HCT116 (cell line): ENCODE measurements at regions of chr11 and their contacts with region 1.

Region 1: DNA sequence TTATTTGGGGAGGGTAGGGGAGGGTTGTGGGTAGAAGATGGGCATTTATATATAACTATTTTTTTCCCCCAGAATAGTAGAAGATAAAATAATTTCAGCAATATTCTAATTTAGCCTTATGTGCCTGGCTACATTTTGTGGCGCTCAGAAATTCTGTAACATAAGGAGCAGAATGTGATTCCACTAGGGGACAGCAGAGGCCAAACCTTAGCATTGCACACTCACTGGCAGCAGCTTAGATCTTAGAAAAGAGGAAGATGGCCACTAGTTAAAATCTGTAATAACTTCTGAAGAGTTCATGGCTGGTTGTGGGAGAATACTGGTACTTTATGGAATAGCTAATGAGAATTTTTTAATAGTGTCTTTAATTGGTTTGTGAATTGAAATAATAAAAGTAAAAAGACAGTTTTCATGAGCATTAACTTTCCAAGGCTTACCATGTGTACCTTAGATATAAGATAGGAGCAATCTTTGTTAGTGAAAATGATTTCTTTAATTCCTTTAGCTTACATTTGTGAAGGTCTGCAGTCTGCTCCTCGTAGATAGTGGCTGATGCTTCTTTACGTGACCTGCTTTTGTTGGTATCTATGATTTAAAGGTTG is 33.1 kb downstream of the DDX10 start:
- DNase-seq: peak; percentile 51
- ATAC-seq: peak; percentile 86
- H3K4me3 ChIP-seq: no peak overlapping the region
- H3K27ac ChIP-seq: no peak overlapping the region
- H3K4me1 ChIP-seq: peaks cover 5 to 13% of the 10 kb centered on the region in 2 experiments
- H3K27me3 ChIP-seq: no peaks in the 10 kb centered on the region
- CTCF ChIP-seq: peak; percentile 74 to 89 (median 88)
- POLR2A ChIP-seq: no peak
- RAD21 ChIP-seq: peak; percentile 97

Region 2: DNA sequence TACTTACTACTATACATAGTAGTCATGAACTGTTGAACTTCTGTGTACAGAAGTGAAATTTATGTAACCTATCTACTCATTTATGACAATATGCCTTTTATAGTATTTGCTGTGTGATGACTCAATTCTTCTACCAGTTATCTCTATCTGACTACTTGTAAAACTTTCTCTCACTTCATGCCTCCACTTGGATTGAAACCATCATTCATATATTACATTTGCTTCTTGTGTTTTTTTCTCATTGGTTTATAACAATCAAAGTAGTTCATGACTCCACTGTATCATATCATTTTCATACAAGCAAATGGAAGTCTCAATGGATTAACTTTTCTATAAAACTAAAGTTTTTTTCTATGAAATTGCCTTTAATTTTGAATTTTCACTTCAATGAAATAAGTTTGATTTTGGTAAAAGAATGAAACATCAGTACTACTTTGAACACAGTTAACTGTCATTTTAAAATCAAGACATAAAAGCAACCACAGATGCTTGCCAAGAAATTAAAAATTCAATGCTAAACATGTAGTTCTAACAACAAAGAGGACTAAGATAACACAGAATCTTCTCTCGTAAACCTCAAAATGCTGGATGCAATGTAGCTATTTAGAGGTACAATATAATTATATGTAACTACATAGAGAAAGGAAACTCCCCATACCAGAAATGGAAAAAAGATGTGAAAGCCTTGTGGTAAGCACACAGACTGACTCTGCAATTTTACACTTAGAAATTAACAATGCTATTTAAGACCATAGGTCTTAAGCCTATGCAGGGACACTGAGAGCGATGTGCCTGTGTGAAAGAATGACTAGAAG is 76.8 kb before region 1 on chr11:
- CTCF ChIA-PET with region 1: no interaction called
- POLR2A ChIA-PET with region 1: no interaction called
- RAD21 ChIA-PET with region 1: no interaction called
- intact Hi-C with region 1: no loop called
- DNase-seq: no peak
- ATAC-seq: no peak
- H3K4me3 ChIP-seq: no peak overlapping the region
- H3K27ac ChIP-seq: no peak overlapping the region
- H3K4me1 ChIP-seq: peaks cover 15 to 36% of the 10 kb centered on the region in 2 experiments
- H3K27me3 ChIP-seq: no peaks in the 10 kb centered on the region
- CTCF ChIP-seq: no peak
- POLR2A ChIP-seq: no peak
- RAD21 ChIP-seq: no peak

Region 3: GRCh38 chr11:108718466-108718865 is 20.5 kb after region 1 on chr11:
- CTCF ChIA-PET with region 1: no interaction called
- POLR2A ChIA-PET with region 1: no interaction called
- RAD21 ChIA-PET with region 1: no interaction called
- intact Hi-C with region 1: no loop called
- DNase-seq: no peak
- ATAC-seq: no peak
- H3K4me3 ChIP-seq: no peak overlapping the region
- H3K27ac ChIP-seq: no peak overlapping the region
- H3K4me1 ChIP-seq: no peaks in the 10 kb centered on the region
- H3K27me3 ChIP-seq: no peaks in the 10 kb centered on the region
- CTCF ChIP-seq: no peak
- POLR2A ChIP-seq: no peak
- RAD21 ChIP-seq: no peak

Region 4: DNA sequence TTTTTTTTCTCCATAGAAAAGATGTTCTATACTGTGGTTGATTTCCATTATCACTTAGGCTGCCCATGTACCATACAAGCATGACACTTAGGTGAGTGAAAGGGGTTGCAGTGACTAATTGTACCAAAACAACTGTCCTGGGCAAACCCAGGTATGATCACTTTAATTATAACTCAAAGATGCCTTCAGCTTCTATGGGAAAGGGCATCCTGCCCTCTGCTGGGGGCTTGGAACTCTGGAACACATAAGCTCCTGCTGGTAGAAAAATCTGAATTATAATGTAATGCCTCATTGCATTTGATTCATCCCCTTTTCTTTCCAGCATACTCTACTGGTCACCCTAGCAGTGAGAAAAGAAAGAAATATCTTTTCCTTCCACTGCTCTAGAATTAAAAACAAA is 173.2 kb after region 1 on chr11:
- CTCF ChIA-PET with region 1: interaction called, 23 read pairs
- POLR2A ChIA-PET with region 1: no interaction called
- RAD21 ChIA-PET with region 1: interaction called in 1 of 2 experiments, 5 read pairs
- intact Hi-C with region 1: loop called (anchors 1 kb)
- DNase-seq: no peak
- ATAC-seq: peak; percentile 75
- H3K4me3 ChIP-seq: no peak overlapping the region
- H3K27ac ChIP-seq: peak overlapping the region; percentile 75
- H3K4me1 ChIP-seq: peaks cover 30 to 42% of the 10 kb centered on the region in 2 experiments
- H3K27me3 ChIP-seq: no peaks in the 10 kb centered on the region
- CTCF ChIP-seq: peak; percentile 48 to 72 (median 70); a peak in 5 of 6 replicates
- POLR2A ChIP-seq: no peak
- RAD21 ChIP-seq: peak; percentile 80

Region 5: DNA sequence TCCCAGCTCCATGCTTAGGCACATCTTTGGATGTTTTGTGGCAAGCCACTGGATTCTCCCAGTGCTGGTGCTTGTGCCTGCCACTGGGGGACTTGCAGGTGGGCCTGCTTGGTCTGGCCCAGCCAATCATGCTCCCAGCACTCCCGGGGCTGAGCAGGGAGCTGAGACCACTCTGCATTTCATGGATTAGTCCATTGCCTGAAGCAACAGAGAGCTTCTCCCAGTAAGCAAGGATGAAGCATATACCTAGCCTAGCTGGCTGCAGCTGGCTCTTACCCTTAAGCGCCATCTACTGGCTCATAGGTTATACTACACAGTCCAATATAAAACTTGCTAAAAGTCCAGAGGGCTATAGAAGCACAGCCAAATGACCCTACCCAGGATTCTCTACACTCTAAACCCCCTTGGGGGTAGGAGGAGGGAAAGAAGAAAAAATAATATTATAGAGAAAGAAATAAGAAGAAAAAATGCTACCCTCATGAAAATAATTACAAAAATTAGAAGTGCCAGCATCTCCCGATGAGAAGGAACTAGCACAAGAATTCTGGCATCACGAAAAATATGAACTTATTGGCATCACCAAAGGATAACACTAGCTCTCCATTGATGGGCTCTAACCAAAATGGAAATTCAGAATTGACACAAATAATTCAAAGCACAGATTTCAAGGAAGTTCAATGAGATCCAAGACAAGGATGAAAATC is 999.3 kb after region 1 on chr11:
- CTCF ChIA-PET with region 1: interaction called, 3 read pairs
- POLR2A ChIA-PET with region 1: no interaction called
- RAD21 ChIA-PET with region 1: no interaction called
- intact Hi-C with region 1: loop called (anchors 2 kb)
- DNase-seq: peak; percentile 23
- ATAC-seq: peak; percentile 93
- H3K4me3 ChIP-seq: no peak overlapping the region
- H3K27ac ChIP-seq: no peak overlapping the region
- H3K4me1 ChIP-seq: peaks cover 0 to 19% of the 10 kb centered on the region in 2 experiments; a peak in 1 of 4 replicates
- H3K27me3 ChIP-seq: no peaks in the 10 kb centered on the region
- CTCF ChIP-seq: peak; percentile 39 to 79 (median 72); a peak in 5 of 6 replicates
- POLR2A ChIP-seq: no peak
- RAD21 ChIP-seq: peak; percentile 79

Region 6: GRCh38 chr11:109789901-109790300 is 1091.9 kb after region 1 on chr11:
- CTCF ChIA-PET with region 1: no interaction called
- POLR2A ChIA-PET with region 1: no interaction called
- RAD21 ChIA-PET with region 1: no interaction called
- intact Hi-C with region 1: loop called (anchors 5 kb)
- DNase-seq: no peak
- ATAC-seq: no peak
- H3K4me3 ChIP-seq: no peak overlapping the region
- H3K27ac ChIP-seq: no peak overlapping the region
- H3K4me1 ChIP-seq: no peaks in the 10 kb centered on the region
- H3K27me3 ChIP-seq: no peaks in the 10 kb centered on the region
- CTCF ChIP-seq: no peak
- POLR2A ChIP-seq: no peak
- RAD21 ChIP-seq: no peak

Region 7: DNA sequence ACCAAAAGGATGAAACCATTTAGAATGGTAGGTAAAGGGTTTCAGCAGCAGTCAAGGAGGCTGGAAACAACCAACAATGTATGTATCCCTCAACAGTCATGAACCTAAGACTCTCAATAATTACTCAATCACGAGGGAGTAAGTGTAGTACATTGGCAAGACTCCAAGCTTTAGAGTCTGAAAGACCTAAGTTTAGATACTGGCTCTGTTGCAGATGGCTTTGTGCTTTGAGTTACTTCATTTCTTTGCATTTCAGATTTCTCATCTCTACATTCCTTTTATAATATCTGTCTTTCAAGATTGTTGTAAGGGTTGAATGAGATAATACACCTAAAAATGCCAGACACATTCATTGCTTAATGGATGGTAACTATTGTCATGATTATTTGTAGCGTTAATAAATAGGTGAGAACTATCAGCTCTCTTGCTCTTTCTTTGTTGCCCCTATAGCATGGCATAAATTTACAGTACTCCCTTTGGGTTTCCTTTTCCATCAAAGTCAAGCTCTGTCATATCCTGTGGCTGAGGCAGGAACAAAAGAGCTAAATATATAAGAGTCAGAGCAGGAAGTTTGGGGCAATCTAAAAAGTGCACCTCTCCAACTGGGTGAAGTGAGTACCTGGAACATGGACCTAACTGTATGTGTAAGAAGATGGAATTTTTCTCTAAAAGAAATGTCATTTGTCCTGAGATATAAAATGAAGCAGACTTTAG is 1167.0 kb after region 1 on chr11:
- CTCF ChIA-PET with region 1: interaction called, 3 read pairs
- POLR2A ChIA-PET with region 1: no interaction called
- RAD21 ChIA-PET with region 1: no interaction called
- intact Hi-C with region 1: loop called (anchors 1 kb)
- DNase-seq: no peak
- ATAC-seq: peak; percentile 7
- H3K4me3 ChIP-seq: no peak overlapping the region; a peak in 1 of 4 replicates
- H3K27ac ChIP-seq: peak overlapping the region; percentile 58; the same call in 1 of the 2 replicates
- H3K4me1 ChIP-seq: peaks cover 18 to 57% of the 10 kb centered on the region in 2 experiments
- H3K27me3 ChIP-seq: no peaks in the 10 kb centered on the region
- CTCF ChIP-seq: no peak
- POLR2A ChIP-seq: no peak
- RAD21 ChIP-seq: no peak

Region 8: GRCh38 chr11:109939166-109939810 is 1241.3 kb after region 1 on chr11:
- CTCF ChIA-PET with region 1: interaction called, 12 read pairs
- POLR2A ChIA-PET with region 1: no interaction called
- RAD21 ChIA-PET with region 1: no interaction called
- intact Hi-C with region 1: loop called (anchors 2 kb)
- DNase-seq: peak; percentile 85
- ATAC-seq: peak; percentile 96
- H3K4me3 ChIP-seq: no peak overlapping the region
- H3K27ac ChIP-seq: no peak overlapping the region
- H3K4me1 ChIP-seq: peaks cover 0 to 21% of the 10 kb centered on the region in 2 experiments; a peak in 3 of 4 replicates
- H3K27me3 ChIP-seq: no peaks in the 10 kb centered on the region
- CTCF ChIP-seq: peak; percentile 71 to 82 (median 80)
- POLR2A ChIP-seq: no peak
- RAD21 ChIP-seq: peak; percentile 99